Activated naive CD4-positive, alpha-beta T cell treated with anti-CD3 and anti-CD28 coated beads for 36 hours (primary cell): ENCODE measurements at regions of chr6 and their contacts with region 1.

Region 1: GRCh38 chr6:291697-292505 is at the start of gene DUSP22:
- DNase-seq: peak; percentile 85
- H3K4me3 Mint-ChIP-seq: peak within 1 kb of the TSS; percentile 92
- H3K27ac Mint-ChIP-seq: peak within 1 kb of the TSS; percentile 95
- H3K4me1 Mint-ChIP-seq: peaks cover 67% of the 10 kb centered on the region
- H3K27me3 Mint-ChIP-seq: no peaks in the 10 kb centered on the region
- total RNA-seq, gene DUSP22: 44.6 to 46.9 TPM

Region 2: DNA sequence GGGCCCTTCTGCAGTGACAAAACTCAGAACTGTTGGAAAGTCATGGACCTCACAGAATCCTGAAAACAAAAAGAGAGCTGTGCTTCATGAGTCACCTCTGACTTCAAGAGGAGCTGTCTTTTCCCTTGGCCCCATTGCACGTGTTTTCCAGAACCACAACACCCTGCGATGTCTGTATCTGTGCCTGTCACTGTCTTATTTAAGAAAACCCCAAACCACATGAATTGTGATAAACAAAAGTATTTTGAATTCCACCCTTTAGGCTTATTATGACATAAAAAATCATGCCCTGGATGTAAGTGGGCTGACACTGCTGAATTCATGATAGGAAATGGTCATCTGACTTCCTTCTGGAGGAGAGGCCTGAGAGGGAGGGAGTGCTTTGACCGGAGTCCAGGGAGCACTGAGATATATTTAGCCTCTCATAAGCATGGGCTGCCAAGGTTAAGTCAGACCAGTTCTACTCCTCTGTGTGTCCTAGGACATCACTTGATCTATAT is 96.0 kb before region 1 on chr6:
- CTCF ChIA-PET with region 1: interaction called, 6 read pairs
- intact Hi-C with region 1: loop called (anchors 2 kb)
- DNase-seq: peak; percentile 89
- H3K4me3 Mint-ChIP-seq: no peak overlapping the region
- H3K27ac Mint-ChIP-seq: peak overlapping the region; percentile 64
- H3K4me1 Mint-ChIP-seq: peaks cover 50% of the 10 kb centered on the region
- H3K27me3 Mint-ChIP-seq: no peaks in the 10 kb centered on the region

Region 3: GRCh38 chr6:235763-236360 is 56.0 kb before region 1 on chr6:
- CTCF ChIA-PET with region 1: no interaction called
- intact Hi-C with region 1: loop called (anchors 1 kb)
- DNase-seq: peak; percentile 88
- H3K4me3 Mint-ChIP-seq: peak overlapping the region; percentile 52
- H3K27ac Mint-ChIP-seq: peak overlapping the region; percentile 86
- H3K4me1 Mint-ChIP-seq: peaks cover 41% of the 10 kb centered on the region
- H3K27me3 Mint-ChIP-seq: no peaks in the 10 kb centered on the region

Region 4: GRCh38 chr6:273551-274058 is 18.3 kb before region 1 on chr6:
- CTCF ChIA-PET with region 1: no interaction called
- intact Hi-C with region 1: no loop called
- DNase-seq: no peak
- H3K4me3 Mint-ChIP-seq: no peak overlapping the region
- H3K27ac Mint-ChIP-seq: no peak overlapping the region
- H3K4me1 Mint-ChIP-seq: peaks cover 23% of the 10 kb centered on the region
- H3K27me3 Mint-ChIP-seq: no peaks in the 10 kb centered on the region

Region 5: GRCh38 chr6:317448-318144 is 25.7 kb after region 1 on chr6:
- CTCF ChIA-PET with region 1: interaction called, 3 read pairs
- intact Hi-C with region 1: loop called (anchors 2 kb)
- DNase-seq: no peak
- H3K4me3 Mint-ChIP-seq: no peak overlapping the region
- H3K27ac Mint-ChIP-seq: no peak overlapping the region
- H3K4me1 Mint-ChIP-seq: peaks cover 29% of the 10 kb centered on the region
- H3K27me3 Mint-ChIP-seq: no peaks in the 10 kb centered on the region

Region 6: DNA sequence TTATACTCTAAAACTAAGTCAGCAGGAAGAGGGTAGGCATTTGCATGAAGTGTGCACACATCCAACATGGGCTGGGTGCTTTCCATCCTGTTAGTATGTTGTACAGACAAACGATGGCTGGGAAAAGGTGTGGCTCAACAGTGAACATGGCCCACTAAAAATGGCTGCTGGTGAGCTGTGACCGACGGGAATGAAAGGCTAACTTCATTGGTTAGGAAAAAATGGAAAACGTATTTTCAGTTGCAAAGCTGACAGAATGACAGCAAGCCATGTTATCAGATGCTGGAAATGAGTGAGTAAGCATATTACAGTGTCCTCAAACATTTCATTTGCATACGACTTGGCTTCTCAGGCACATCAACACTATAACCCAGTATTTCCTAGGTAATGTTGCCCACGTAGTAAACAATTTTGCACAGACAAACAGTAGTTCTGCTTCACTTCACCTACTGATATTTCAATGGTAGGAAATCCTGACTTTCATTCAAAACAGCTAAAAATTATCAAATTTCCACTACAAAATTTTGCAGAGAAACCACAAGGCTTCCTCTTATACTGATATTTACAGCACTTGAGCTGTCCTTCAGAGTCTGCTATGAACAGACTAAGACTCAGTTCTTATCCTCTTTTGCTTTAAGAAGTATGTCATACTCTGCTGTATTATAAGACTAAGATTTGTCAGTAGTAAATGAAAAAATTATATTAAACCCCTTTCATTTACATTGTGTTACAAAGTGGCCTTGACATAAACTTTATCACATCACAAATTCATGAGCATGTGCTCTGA is 198.5 kb after region 1 on chr6:
- CTCF ChIA-PET with region 1: interaction called, 3 read pairs
- intact Hi-C with region 1: loop called (anchors 5 kb)
- DNase-seq: peak; percentile 80
- H3K4me3 Mint-ChIP-seq: peak overlapping the region; percentile 41
- H3K27ac Mint-ChIP-seq: peak overlapping the region; percentile 95
- H3K4me1 Mint-ChIP-seq: peaks cover 94% of the 10 kb centered on the region
- H3K27me3 Mint-ChIP-seq: no peaks in the 10 kb centered on the region

Region 7: DNA sequence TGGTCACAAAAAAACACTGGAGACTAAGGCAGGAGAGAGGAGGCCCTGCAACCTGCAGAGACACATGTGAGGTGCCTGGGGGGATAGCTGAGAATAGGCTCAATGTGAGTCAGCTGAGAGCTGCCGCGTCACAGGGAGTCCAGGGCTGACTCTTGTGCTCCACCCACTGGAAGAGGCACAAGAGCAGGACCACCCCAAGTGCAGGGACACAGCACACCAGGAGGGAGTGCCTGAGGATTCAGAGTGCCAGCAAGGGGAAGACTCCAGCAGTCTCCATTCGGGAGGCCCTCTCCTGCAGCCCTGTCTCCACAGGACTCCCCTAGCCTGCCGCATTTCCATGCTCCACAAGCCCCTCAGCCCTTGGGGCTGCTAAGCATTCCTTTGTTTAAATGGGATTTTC is 259.5 kb after region 1 on chr6:
- CTCF ChIA-PET with region 1: no interaction called
- intact Hi-C with region 1: loop called (anchors 5 kb)
- DNase-seq: peak; percentile 56
- H3K4me3 Mint-ChIP-seq: no peak overlapping the region
- H3K27ac Mint-ChIP-seq: peak overlapping the region; percentile 79
- H3K4me1 Mint-ChIP-seq: peaks cover 57% of the 10 kb centered on the region
- H3K27me3 Mint-ChIP-seq: no peaks in the 10 kb centered on the region